Activated CD8-positive, alpha-beta T cell treated with anti-CD3 and anti-CD28 coated beads for 36 hours (primary cell): ENCODE measurements at regions of chr17 and their contacts with region 1.

Region 1: GRCh38 chr17:48307814-48308411 is 122.1 kb downstream of the SKAP1 start:
- DNase-seq: peak; percentile 69
- ATAC-seq: peak; percentile 82
- H3K4me3 Mint-ChIP-seq: no peak overlapping the region
- H3K27ac Mint-ChIP-seq: no peak overlapping the region
- H3K4me1 Mint-ChIP-seq: peaks cover 30% of the 10 kb centered on the region
- H3K27me3 Mint-ChIP-seq: no peaks in the 10 kb centered on the region
- CTCF ChIP-seq: peak; percentile 71

Region 2: GRCh38 chr17:48295362-48296288 is 12.3 kb before region 1 on chr17:
- CTCF ChIA-PET with region 1: interaction called, 27 read pairs
- POLR2A ChIA-PET with region 1: interaction called, 4 read pairs
- intact Hi-C with region 1: no loop called
- DNase-seq: no peak
- ATAC-seq: peak; percentile 62
- H3K4me3 Mint-ChIP-seq: peak overlapping the region; percentile 74
- H3K27ac Mint-ChIP-seq: peak overlapping the region; percentile 97
- H3K4me1 Mint-ChIP-seq: peaks cover 67% of the 10 kb centered on the region
- H3K27me3 Mint-ChIP-seq: no peaks in the 10 kb centered on the region
- CTCF ChIP-seq: no peak

Region 3: DNA sequence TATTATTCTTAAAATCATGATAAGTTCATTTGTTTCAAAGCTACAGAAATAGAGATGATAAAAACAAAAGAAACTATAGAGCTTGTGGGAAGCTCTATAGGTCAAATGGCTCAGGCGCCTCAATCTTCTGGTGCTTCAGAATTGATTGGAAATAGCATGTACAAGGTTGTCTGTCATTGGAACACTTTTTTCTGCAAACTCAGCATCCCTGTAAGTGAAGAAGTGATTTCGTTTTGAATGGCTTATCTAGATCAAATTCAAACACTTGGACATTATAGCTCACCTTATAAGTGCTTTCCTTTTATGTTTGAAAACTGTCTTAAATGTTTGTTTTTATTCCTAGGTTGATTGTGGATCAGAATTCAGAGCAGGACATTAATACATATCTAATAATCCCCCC is 18.4 kb after region 1 on chr17:
- CTCF ChIA-PET with region 1: interaction called, 12 read pairs
- POLR2A ChIA-PET with region 1: no interaction called
- intact Hi-C with region 1: no loop called
- DNase-seq: no peak
- ATAC-seq: no peak
- H3K4me3 Mint-ChIP-seq: no peak overlapping the region
- H3K27ac Mint-ChIP-seq: no peak overlapping the region
- H3K4me1 Mint-ChIP-seq: peaks cover 14% of the 10 kb centered on the region
- H3K27me3 Mint-ChIP-seq: no peaks in the 10 kb centered on the region
- CTCF ChIP-seq: no peak

Region 4: DNA sequence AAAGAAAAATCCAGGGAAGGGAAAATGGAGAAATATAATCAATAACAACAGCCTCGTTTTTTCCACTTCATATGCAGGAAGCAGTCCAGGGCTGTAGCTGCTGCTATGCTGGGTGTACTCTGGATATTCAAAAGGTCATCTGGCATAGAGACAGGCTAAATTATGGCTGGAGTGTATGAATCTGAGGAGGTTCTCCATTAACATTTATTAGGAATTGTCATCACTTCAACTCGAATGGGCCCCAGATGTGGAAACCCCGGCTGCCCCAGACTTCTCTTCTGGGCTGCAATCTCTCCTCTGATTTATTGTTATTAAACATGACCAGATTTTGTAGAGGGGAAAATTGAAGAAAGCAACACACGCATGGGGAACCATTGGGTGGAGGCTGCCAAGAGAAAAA is 155.6 kb after region 1 on chr17:
- CTCF ChIA-PET with region 1: no interaction called
- POLR2A ChIA-PET with region 1: no interaction called
- intact Hi-C with region 1: no loop called
- DNase-seq: no peak
- ATAC-seq: no peak
- H3K4me3 Mint-ChIP-seq: no peak overlapping the region
- H3K27ac Mint-ChIP-seq: no peak overlapping the region
- H3K4me1 Mint-ChIP-seq: peaks cover 6% of the 10 kb centered on the region
- H3K27me3 Mint-ChIP-seq: peaks cover 2% of the 10 kb centered on the region
- CTCF ChIP-seq: no peak